Heart right ventricle (tissue), 16 donors: ENCODE measurements at regions of chr3 and their contacts with region 1.

Region 1: GRCh38 chr3:187319699-187320302 is 28.3 kb upstream of the MASP1 start:
- DNase-seq: peak; percentile 48 to 75
- ATAC-seq: peak; percentile 84 to 96 (median 92)
- H3K4me3 ChIP-seq: peak overlapping the region in 3 of 10 donors; percentile 25 to 51 (median 42)
- H3K27ac ChIP-seq: peak overlapping the region in 5 of 10 donors; percentile 11 to 54 (median 23)
- H3K4me1 ChIP-seq: peaks cover 0 to 15% (median 11%) of the 10 kb centered on the region in 9 donors
- H3K27me3 ChIP-seq: peaks cover 0 to 13% (median 0%) of the 10 kb centered on the region in 7 donors
- CTCF ChIP-seq: peak; percentile 71 to 97 (median 89)

Region 2: DNA sequence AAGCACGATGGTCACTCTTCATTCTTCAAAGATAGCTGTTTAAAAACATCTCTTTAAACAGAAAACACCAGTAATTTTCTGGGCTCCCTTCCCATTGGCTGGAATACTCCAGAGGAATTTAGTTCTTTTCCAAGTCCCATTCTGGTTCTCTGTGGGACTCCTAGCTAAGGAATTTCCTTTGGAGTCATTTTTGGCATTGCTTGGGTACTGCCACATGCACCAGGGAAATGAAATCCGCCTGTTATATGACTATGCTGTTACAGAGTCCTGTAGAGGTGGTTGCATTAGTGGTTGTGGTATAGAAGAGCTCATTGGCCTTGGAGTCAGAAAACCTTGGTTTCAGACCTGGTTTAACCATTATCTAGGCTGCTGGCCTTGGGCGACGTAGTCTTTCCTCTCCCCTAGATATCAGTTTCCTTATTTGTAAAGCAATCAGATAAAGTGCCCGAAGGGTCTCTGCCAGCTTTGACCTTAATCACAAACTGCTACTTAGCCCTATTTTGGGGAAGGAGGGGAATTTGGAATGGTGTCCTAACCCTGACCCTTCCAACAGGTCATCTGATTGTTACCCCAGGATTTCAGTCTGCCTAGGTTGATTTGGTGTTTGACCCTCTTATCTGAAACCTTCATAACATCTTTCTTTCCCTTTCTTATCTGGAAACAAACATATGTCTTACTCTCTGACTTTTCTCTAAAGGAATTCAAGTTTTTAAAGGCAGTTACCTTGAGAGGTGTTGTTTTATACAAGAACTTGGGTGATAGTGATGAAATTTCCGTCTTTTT is 109.1 kb before region 1 on chr3:
- intact Hi-C with region 1: loop called in 1 of 10 experiments (anchors 5 kb)
- DNase-seq: peak in 1 of 2 donors; percentile 18
- ATAC-seq: peak in 7 of 8 donors; percentile 9 to 47 (median 37)
- H3K4me3 ChIP-seq: no peak overlapping the region
- H3K27ac ChIP-seq: peak overlapping the region in 3 of 10 donors; percentile 42 to 79 (median 53)
- H3K4me1 ChIP-seq: peaks cover 5 to 45% (median 27%) of the 10 kb centered on the region in 9 donors
- H3K27me3 ChIP-seq: no peaks in the 10 kb centered on the region
- CTCF ChIP-seq: no peak

Region 3: DNA sequence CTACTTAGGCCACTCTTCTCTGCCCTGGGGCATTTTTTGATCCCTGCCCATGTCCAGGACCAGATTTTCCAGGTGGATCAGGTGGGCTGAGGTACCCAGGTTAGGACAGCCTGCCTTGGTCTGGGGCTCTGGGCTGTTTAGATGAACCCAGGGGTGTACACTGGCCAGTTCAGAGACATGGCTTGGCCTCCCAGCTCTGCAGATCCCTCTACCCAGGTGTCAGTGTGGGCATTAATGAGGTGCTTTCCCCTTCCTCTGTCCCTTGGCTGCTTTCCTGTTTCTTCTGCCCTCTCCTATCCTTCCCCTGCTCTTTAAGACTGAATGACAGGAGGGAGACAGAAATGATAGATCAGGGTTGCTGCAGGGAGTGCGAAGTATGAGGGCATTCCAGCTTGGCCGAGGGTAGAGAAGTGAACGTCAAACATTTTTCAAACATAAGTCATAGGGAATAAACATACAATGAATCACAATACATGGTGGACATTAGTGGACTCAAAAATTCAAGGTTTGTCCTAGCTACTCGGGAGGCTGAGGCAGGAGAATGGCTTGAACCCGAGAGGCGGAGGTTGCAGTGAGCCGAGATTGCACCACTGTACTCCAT is 92.0 kb before region 1 on chr3:
- intact Hi-C with region 1: loop called in 8 of 10 experiments (anchors 2 to 10 kb)
- DNase-seq: no peak
- ATAC-seq: no peak
- H3K4me3 ChIP-seq: no peak overlapping the region
- H3K27ac ChIP-seq: no peak overlapping the region
- H3K4me1 ChIP-seq: no peaks in the 10 kb centered on the region
- H3K27me3 ChIP-seq: no peaks in the 10 kb centered on the region
- CTCF ChIP-seq: no peak

Region 4: GRCh38 chr3:187264021-187264420 is 55.8 kb before region 1 on chr3:
- intact Hi-C with region 1: no loop called
- DNase-seq: no peak
- ATAC-seq: peak in 5 of 8 donors; percentile 51 to 62 (median 56)
- H3K4me3 ChIP-seq: no peak overlapping the region
- H3K27ac ChIP-seq: peak overlapping the region; percentile 2 to 89 (median 76)
- H3K4me1 ChIP-seq: peaks cover 14 to 45% (median 34%) of the 10 kb centered on the region in 9 donors
- H3K27me3 ChIP-seq: no peaks in the 10 kb centered on the region
- CTCF ChIP-seq: no peak

Region 5: GRCh38 chr3:187616307-187616972 is 296.6 kb after region 1 on chr3:
- intact Hi-C with region 1: loop called in 3 of 10 experiments (anchors 5 to 10 kb)
- DNase-seq: peak in 1 of 2 donors; percentile 34
- ATAC-seq: peak in 1 of 8 donors; percentile 23
- H3K4me3 ChIP-seq: no peak overlapping the region
- H3K27ac ChIP-seq: no peak overlapping the region
- H3K4me1 ChIP-seq: peaks cover 0 to 3% (median 0%) of the 10 kb centered on the region in 9 donors
- H3K27me3 ChIP-seq: peaks cover 0 to 6% (median 0%) of the 10 kb centered on the region in 7 donors
- CTCF ChIP-seq: peak; percentile 26 to 75 (median 68)

Region 6: GRCh38 chr3:187679638-187680396 is 360.0 kb after region 1 on chr3:
- intact Hi-C with region 1: loop called (anchors 1 to 5 kb)
- DNase-seq: peak; percentile 73 to 78
- ATAC-seq: peak; percentile 86 to 95 (median 92)
- H3K4me3 ChIP-seq: no peak overlapping the region
- H3K27ac ChIP-seq: no peak overlapping the region
- H3K4me1 ChIP-seq: peaks cover 0 to 12% (median 6%) of the 10 kb centered on the region in 9 donors
- H3K27me3 ChIP-seq: peaks cover 0 to 20% (median 3%) of the 10 kb centered on the region in 7 donors
- CTCF ChIP-seq: peak; percentile 81 to 94 (median 92)

Region 7: GRCh38 chr3:187714404-187714979 is 394.7 kb after region 1 on chr3:
- intact Hi-C with region 1: loop called in 9 of 10 experiments (anchors 1 to 10 kb)
- DNase-seq: peak in 1 of 2 donors; percentile 80
- ATAC-seq: peak; percentile 76 to 94 (median 86)
- H3K4me3 ChIP-seq: no peak overlapping the region
- H3K27ac ChIP-seq: no peak overlapping the region
- H3K4me1 ChIP-seq: peaks cover 0 to 12% (median 3%) of the 10 kb centered on the region in 9 donors
- H3K27me3 ChIP-seq: no peaks in the 10 kb centered on the region
- CTCF ChIP-seq: peak; percentile 93 to 97 (median 94)

Region 8: DNA sequence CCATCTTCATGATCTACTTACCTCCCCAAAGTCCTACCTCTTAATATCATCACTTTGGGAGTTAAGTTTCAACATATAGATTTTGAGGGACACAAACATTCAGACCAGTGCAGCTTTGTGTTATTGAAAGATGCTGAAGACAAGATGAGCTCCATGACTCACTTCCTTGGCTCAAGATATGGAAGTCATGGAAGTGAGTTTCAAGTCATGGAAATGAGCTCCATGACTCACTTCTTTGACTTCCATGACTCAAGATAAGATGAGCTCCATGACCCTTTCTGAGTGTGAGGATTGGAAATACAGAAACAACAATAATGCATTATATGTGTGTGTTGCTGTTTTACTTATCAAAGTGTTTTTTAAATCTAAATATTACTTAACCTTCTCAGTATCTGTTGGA is 1681.8 kb after region 1 on chr3:
- intact Hi-C with region 1: loop called in 1 of 10 experiments (anchors 10 kb)
- DNase-seq: no peak
- ATAC-seq: no peak
- H3K4me3 ChIP-seq: no peak overlapping the region
- H3K27ac ChIP-seq: no peak overlapping the region
- H3K4me1 ChIP-seq: no peaks in the 10 kb centered on the region
- H3K27me3 ChIP-seq: no peaks in the 10 kb centered on the region
- CTCF ChIP-seq: no peak